ENCODE measurements at regions of chr11 and their contacts with region 1.

Region 1: DNA sequence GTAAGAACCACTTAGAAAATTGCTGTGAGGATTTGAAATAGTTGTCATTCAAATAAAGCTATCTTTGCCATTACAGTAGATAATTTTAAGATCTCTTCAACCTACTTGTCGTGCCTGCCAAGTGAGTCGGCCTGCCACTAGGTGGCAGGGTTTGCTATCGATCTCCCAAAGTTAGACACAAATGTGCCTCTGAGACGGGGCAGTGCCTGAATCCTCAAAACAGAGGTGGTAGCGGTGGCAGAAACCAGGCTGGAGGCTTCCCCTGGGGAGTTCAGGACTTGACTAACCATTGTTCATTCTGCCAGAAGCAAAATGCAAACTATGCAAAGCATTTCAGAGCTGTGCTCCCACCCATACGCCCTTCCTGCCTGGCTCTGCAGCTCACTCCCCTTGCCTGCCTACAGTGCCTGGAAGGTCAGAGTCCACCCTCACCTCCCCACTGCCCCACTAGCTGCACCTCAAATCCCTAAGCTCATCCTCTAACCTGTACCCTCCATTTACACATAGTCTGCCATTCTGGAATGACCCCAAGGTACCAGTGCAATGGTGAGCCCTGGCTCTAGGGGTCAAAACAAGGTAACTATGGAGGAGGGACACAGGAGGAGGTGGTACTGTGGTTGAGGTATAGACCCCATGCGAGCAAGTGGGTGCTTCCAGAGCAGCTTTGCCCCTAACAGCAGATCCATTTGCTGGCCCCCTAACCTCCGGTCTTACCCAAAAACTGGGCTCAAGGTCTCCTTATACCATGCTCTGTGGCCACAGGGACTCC is 82.1 kb downstream of the C11orf58 start:
- DNase-seq: peak; percentile 78
- H3K4me3 Mint-ChIP-seq: no peak overlapping the region
- H3K27ac Mint-ChIP-seq: no peak overlapping the region
- H3K4me1 Mint-ChIP-seq: peaks cover 5% of the 10 kb centered on the region
- H3K27me3 Mint-ChIP-seq: no peaks in the 10 kb centered on the region
- CTCF ChIP-seq: peak; percentile 63

Region 2: DNA sequence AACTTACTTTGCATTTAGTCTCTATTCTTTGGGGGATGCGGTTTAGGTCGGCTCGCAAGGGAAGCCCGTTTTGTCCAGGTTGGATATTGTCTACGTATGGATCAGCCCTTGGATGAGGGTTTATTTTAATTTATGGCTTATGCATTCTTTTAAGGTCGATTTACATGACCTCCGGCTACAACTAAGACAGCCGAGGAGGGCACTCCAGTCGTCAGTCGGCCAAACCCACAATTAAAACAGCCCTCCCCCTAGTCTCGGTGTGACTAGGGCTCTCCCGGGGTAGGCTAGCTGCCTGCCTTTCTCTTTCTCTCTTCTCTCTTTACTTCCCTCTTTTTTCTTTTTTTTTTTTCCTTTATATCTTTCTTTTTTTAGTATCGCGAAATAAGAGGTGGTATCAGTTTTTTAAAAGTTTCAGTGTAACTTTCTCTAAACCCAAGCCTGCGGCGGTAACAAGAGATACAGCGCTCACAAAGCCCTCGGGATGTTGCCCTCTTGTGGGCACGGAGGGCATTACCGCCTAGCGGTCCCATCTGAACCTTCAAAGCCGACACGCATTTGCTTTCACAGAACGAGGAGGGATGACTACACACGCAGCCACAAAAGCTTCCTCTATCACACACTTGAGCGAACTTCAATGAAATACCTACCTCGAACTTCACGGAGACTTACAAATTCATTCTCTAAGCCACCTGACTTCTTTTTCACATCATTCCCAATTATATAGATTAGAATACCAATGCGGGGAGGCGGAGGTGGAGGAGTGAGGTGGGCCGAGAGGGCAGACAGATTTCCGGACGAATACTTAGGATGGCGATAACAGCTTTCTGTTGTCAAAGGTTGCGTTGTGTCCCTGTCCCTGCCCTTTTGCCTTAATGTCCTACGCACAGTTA is 214.4 kb before region 1 on chr11:
- CTCF ChIA-PET with region 1: no interaction called
- POLR2A ChIA-PET with region 1: no interaction called
- intact Hi-C with region 1: no loop called
- DNase-seq: peak; percentile 91
- H3K4me3 Mint-ChIP-seq: no peak overlapping the region
- H3K27ac Mint-ChIP-seq: no peak overlapping the region
- H3K4me1 Mint-ChIP-seq: no peaks in the 10 kb centered on the region
- H3K27me3 Mint-ChIP-seq: peaks cover under 1% of the 10 kb centered on the region
- CTCF ChIP-seq: peak; percentile 91

Region 3: GRCh38 chr11:16759857-16760256 is 60.7 kb before region 1 on chr11:
- CTCF ChIA-PET with region 1: no interaction called
- POLR2A ChIA-PET with region 1: no interaction called
- intact Hi-C with region 1: no loop called
- DNase-seq: no peak
- H3K4me3 Mint-ChIP-seq: no peak overlapping the region
- H3K27ac Mint-ChIP-seq: no peak overlapping the region
- H3K4me1 Mint-ChIP-seq: no peaks in the 10 kb centered on the region
- H3K27me3 Mint-ChIP-seq: no peaks in the 10 kb centered on the region
- CTCF ChIP-seq: no peak

Region 4: DNA sequence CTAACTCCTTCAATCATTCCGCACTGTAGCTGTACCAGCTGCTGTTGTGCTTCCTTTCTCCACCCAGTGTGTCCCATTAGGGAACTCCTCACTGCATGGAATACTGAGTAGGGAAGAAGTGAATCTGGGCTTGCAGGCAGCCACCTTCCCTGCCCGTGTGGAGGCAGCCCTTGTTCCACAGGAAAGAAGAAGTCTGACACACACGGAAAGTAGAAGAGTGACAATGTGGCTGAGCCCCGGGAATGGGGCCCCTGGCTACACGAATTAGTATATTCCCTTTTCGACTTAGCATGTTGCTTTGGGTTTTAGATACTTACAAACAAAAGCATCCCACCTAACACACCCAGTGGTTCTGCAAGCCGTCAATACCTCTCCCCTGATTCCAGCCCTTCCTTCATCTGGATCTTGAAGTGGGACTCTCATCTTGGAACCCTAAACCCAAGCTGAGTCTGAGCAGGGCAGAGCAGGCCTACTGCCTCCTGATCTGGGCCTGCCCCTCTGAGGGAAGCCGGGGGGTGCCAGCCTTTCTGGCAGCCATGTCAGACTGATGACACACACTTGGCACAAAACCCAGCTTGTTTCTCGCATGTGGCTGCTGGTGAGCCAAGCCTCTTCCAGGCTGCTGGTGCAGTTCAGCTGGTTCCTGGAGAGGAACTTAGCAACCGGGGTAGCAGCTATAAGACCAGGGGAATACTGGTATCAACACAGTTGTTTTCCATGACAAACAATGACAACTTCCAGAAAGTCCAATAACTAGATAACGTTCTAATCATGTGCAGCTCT is 10.4 kb before region 1 on chr11:
- CTCF ChIA-PET with region 1: interaction called, 44 read pairs
- POLR2A ChIA-PET with region 1: interaction called, 3 read pairs
- intact Hi-C with region 1: no loop called
- DNase-seq: peak; percentile 68
- H3K4me3 Mint-ChIP-seq: no peak overlapping the region
- H3K27ac Mint-ChIP-seq: no peak overlapping the region
- H3K4me1 Mint-ChIP-seq: peaks cover 5% of the 10 kb centered on the region
- H3K27me3 Mint-ChIP-seq: no peaks in the 10 kb centered on the region
- CTCF ChIP-seq: no peak

Region 5: DNA sequence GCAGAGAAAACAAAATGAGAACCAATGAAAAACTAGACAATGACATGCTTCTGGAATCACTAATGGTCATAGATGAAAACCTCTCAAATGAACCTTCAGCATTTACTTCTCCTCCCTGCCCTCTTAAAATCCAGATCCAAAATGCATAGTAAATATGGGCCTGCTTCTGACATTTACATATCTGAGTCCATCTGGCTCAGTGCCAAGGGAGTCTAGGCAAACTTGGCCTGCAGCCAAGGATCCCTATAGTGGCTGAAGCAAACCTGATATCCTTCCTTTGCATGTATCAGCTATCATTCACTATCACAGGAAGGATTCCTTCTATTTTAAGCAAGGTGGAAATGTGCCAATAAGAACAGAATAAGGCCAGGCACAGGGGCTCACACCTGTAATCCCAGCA is 22.8 kb after region 1 on chr11:
- CTCF ChIA-PET with region 1: interaction called, 14 read pairs
- POLR2A ChIA-PET with region 1: no interaction called
- intact Hi-C with region 1: no loop called
- DNase-seq: peak; percentile 64
- H3K4me3 Mint-ChIP-seq: no peak overlapping the region
- H3K27ac Mint-ChIP-seq: no peak overlapping the region
- H3K4me1 Mint-ChIP-seq: no peaks in the 10 kb centered on the region
- H3K27me3 Mint-ChIP-seq: no peaks in the 10 kb centered on the region
- CTCF ChIP-seq: no peak

Region 6: DNA sequence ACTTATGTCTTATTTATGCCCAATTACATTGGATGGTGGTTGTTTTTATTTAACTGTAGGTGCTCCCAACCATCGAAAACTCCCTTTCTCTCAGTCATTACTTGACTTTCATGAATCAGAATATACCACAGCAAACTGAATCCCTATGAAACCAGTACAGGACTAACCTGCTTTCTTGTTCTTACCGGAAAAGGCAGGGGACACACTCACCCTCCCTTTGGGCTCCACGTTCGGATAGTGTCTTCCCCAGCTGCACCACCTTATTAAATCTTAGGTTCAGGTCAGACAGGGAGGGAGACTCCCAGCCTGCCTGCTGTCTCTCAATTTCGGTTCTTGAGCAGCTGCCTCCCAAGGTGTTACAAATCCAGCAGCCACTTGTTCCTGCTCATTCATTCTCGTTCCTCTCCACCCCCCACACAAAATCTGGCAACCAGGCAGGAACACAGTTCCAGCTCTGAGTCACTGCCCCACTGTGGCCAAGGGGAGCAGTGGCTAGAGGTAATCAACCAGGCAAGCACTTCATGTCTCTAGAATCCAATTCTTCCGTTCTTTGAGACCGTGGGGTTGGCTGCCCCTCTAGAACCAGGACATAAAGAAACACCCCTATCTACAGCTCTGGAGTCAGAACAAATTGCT is 60.7 kb after region 1 on chr11:
- CTCF ChIA-PET with region 1: interaction called, 78 read pairs
- POLR2A ChIA-PET with region 1: interaction called, 3 read pairs
- intact Hi-C with region 1: loop called (anchors 1 kb)
- DNase-seq: peak; percentile 84
- H3K4me3 Mint-ChIP-seq: peak overlapping the region; percentile 35
- H3K27ac Mint-ChIP-seq: no peak overlapping the region
- H3K4me1 Mint-ChIP-seq: peaks cover 19% of the 10 kb centered on the region
- H3K27me3 Mint-ChIP-seq: no peaks in the 10 kb centered on the region
- CTCF ChIP-seq: no peak

Region 7: DNA sequence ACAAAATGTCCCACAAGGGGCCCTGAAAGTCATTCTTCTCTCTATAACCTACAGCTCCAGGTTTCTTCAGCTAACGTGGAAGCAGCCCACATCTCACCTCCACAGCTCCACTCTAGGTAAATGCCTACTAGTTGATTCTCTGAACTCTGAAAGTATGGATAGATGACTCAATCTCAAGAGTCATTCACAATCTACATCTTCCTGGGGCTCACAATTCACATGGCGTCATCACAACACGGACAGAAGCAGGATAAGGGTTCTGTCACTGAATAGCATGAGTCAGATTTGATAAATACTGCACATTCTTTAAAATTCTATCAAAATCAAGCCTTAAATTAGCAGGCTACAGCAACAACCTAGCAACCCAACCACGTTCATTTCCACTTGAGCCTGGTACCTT is 97.4 kb after region 1 on chr11:
- CTCF ChIA-PET with region 1: interaction called, 13 read pairs
- POLR2A ChIA-PET with region 1: no interaction called
- intact Hi-C with region 1: no loop called
- DNase-seq: no peak
- H3K4me3 Mint-ChIP-seq: no peak overlapping the region
- H3K27ac Mint-ChIP-seq: no peak overlapping the region
- H3K4me1 Mint-ChIP-seq: peaks cover 12% of the 10 kb centered on the region
- H3K27me3 Mint-ChIP-seq: no peaks in the 10 kb centered on the region
- CTCF ChIP-seq: no peak

Region 8: GRCh38 chr11:16935518-16936302 is 115.2 kb after region 1 on chr11:
- CTCF ChIA-PET with region 1: interaction called, 9 read pairs
- POLR2A ChIA-PET with region 1: no interaction called
- intact Hi-C with region 1: loop called (anchors 1 kb)
- DNase-seq: peak; percentile 64
- H3K4me3 Mint-ChIP-seq: no peak overlapping the region
- H3K27ac Mint-ChIP-seq: no peak overlapping the region
- H3K4me1 Mint-ChIP-seq: no peaks in the 10 kb centered on the region
- H3K27me3 Mint-ChIP-seq: no peaks in the 10 kb centered on the region
- CTCF ChIP-seq: peak; percentile 62

Region 9: GRCh38 chr11:17077520-17078401 is 257.3 kb after region 1 on chr11 and contains the start of gene RPS13:
- CTCF ChIA-PET with region 1: interaction called, 11 read pairs
- POLR2A ChIA-PET with region 1: interaction called, 4 read pairs
- intact Hi-C with region 1: no loop called
- DNase-seq: peak; percentile 99
- H3K4me3 Mint-ChIP-seq: peak within 1 kb of the TSS; percentile 93
- H3K27ac Mint-ChIP-seq: peak within 1 kb of the TSS; percentile 99
- H3K4me1 Mint-ChIP-seq: peaks cover 27% of the 10 kb centered on the region
- H3K27me3 Mint-ChIP-seq: no peaks in the 10 kb centered on the region
- CTCF ChIP-seq: no peak
- total RNA-seq, gene RPS13: 1,551 and 1,734 TPM in 2 replicates

Measured in MCF 10A (cell line).